CD14-positive monocyte (primary cell): ENCODE measurements at regions of chr1 and their contacts with region 1.

Region 1: GRCh38 chr1:39098546-39099250 is 72.5 kb downstream of the NDUFS5 start:
- DNase-seq: peak; percentile 79 to 93 (median 83)
- H3K4me3 ChIP-seq: no peak overlapping the region
- H3K4me3 Mint-ChIP-seq: no peak overlapping the region
- H3K27ac ChIP-seq: no peak overlapping the region
- H3K27ac Mint-ChIP-seq: peak overlapping the region in 3 of 7 donors; percentile 15 to 53 (median 16)
- H3K4me1 ChIP-seq: peaks cover 17 to 19% of the 10 kb centered on the region in 2 donors
- H3K4me1 Mint-ChIP-seq: peaks cover 23% of the 10 kb centered on the region
- H3K27me3 ChIP-seq: no peaks in the 10 kb centered on the region
- H3K27me3 Mint-ChIP-seq: peaks cover 0 to 5% (median 0%) of the 10 kb centered on the region in 3 donors
- CTCF ChIP-seq: peak; percentile 76

Region 2: DNA sequence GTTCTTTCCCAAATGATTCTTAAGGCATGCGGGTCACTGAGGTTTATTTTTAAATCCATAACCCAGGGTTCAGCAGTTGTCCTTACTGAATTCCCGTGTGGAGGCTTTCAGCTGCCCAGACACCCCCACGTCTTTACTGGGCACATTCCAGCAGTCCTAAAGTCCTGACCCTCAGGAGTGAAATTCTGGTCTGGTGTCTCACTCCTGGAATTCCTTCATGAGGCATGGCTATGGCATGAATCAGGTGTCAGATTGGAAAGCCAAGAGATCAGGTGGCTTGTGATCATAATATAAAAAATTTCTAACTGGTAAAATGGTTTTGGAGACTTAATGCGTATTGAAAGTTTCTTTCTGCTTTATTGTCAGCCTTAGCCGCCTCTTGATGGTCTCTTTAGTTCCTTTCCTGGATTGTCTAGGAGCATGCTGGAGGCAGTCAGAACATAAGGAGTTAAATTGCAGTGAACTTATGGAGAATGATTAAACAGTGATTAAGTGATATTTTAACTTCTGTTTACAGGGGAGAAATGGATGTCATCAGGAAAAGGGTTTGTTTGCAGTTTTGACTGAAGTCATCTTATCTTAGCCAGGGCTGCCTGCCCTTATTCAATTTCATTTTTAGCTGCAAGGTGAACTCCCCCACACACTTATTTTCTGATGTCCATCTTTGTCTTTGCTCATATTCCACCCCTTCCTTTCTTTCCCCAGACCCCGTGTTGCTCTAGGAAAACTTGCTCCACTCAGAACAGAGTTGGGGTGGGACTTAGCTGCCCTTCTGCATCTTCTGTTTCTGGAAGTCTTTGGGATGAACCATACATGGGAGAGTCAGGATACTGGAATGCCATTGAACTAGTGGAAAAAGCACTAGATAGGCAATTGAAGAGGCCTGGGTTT is 80.1 kb after region 1 on chr1:
- intact Hi-C with region 1: loop called in 1 of 2 experiments (anchors 5 kb)
- DNase-seq: no peak
- H3K4me3 ChIP-seq: no peak overlapping the region
- H3K4me3 Mint-ChIP-seq: no peak overlapping the region
- H3K27ac ChIP-seq: no peak overlapping the region
- H3K27ac Mint-ChIP-seq: no peak overlapping the region
- H3K4me1 ChIP-seq: peaks cover 0 to 5% of the 10 kb centered on the region in 2 donors
- H3K4me1 Mint-ChIP-seq: peaks cover 9% of the 10 kb centered on the region
- H3K27me3 ChIP-seq: no peaks in the 10 kb centered on the region
- H3K27me3 Mint-ChIP-seq: no peaks in the 10 kb centered on the region
- CTCF ChIP-seq: no peak

Region 3: DNA sequence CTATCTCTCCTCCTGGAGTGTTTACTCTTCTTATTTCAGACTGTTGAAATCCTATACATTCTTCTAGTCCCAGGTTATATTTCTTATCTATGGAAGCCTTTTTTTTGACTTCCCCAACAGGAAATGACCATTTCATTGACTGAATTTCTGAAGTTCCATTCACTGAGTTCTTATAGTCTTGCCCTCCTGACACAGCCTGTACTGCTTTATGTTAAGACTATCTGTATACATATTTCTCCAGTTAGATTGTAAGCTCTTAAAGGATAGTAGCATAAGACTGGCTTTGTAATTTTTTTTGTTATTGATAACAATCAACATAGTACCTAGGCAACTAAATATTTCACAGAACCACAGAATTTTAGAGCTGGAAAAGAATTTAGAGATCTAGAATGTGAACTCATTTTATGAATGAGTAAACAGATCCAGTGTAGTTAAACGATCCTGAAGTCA is 90.9 kb after region 1 on chr1:
- intact Hi-C with region 1: loop called in 1 of 2 experiments (anchors 5 kb)
- DNase-seq: no peak
- H3K4me3 ChIP-seq: no peak overlapping the region
- H3K4me3 Mint-ChIP-seq: no peak overlapping the region
- H3K27ac ChIP-seq: no peak overlapping the region
- H3K27ac Mint-ChIP-seq: no peak overlapping the region
- H3K4me1 ChIP-seq: peaks cover 0 to 15% of the 10 kb centered on the region in 2 donors
- H3K4me1 Mint-ChIP-seq: peaks cover 20% of the 10 kb centered on the region
- H3K27me3 ChIP-seq: no peaks in the 10 kb centered on the region
- H3K27me3 Mint-ChIP-seq: peaks cover 0 to 4% (median 2%) of the 10 kb centered on the region in 3 donors
- CTCF ChIP-seq: no peak

Region 4: DNA sequence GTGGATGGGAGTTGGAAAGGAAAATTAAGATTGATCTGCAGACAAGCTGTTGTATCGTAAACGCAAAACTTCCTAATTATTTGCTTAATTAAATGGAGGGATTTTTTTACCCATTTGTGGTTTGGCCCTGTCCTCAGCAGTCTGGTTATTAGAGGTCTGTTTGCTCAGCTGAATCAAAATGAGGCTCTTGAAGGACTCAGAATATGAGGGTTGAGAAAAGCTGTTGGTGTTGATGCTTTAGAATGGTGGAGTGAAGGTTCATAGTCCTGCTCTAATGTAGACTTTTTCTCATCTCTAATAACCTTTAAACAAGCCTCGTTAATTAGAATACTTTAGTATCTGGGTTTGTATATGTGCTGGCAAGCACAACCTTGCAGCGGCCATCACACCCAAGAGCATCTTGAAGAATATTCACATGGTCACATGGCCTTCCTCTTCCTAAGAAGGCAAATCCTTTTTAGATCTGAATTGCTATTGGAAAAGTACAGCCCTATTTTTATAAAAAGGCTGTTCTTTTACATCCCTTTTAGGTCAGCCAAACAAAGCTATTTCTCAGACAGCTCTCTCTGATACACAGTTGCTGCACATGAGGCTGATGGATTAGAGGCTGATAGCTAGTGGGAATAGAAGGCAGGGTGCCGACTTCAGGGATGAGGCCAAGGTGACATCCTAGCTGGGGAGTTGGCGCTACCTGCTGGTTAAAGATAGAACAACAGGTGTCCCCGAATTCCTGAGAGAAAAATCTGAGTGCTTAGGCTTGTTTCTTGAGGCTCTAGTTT is 159.6 kb after region 1 on chr1:
- intact Hi-C with region 1: loop called (anchors 1 to 2 kb)
- DNase-seq: peak; percentile 33 to 52 (median 43)
- H3K4me3 ChIP-seq: no peak overlapping the region
- H3K4me3 Mint-ChIP-seq: no peak overlapping the region
- H3K27ac ChIP-seq: no peak overlapping the region
- H3K27ac Mint-ChIP-seq: peak overlapping the region in 1 of 7 donors; percentile 26
- H3K4me1 ChIP-seq: no peaks in the 10 kb centered on the region
- H3K4me1 Mint-ChIP-seq: no peaks in the 10 kb centered on the region
- H3K27me3 ChIP-seq: no peaks in the 10 kb centered on the region
- H3K27me3 Mint-ChIP-seq: no peaks in the 10 kb centered on the region
- CTCF ChIP-seq: peak; percentile 86

Region 5: GRCh38 chr1:39408641-39409054 is 309.9 kb after region 1 on chr1:
- intact Hi-C with region 1: loop called in 1 of 2 experiments (anchors 5 kb)
- DNase-seq: peak; percentile 82 to 88 (median 86)
- H3K4me3 ChIP-seq: peak overlapping the region; percentile 61 to 82 (median 67)
- H3K4me3 Mint-ChIP-seq: peak overlapping the region; percentile 83 to 90
- H3K27ac ChIP-seq: peak overlapping the region; percentile 49 to 60
- H3K27ac Mint-ChIP-seq: peak overlapping the region in 2 of 7 donors; percentile 88 to 92
- H3K4me1 ChIP-seq: peaks cover 34 to 47% of the 10 kb centered on the region in 2 donors
- H3K4me1 Mint-ChIP-seq: peaks cover 58% of the 10 kb centered on the region
- H3K27me3 ChIP-seq: no peaks in the 10 kb centered on the region
- H3K27me3 Mint-ChIP-seq: no peaks in the 10 kb centered on the region
- CTCF ChIP-seq: no peak